ENCODE measurements at regions of chr9 and their contacts with region 1.

Region 1: GRCh38 chr9:136312436-136312835 is 8.5 kb upstream of the CCDC187 start:
- DNase-seq: peak; percentile 58
- ATAC-seq: peak; percentile 94
- H3K4me3 ChIP-seq: no peak overlapping the region
- H3K27ac ChIP-seq: no peak overlapping the region
- H3K4me1 ChIP-seq: peaks cover 3% of the 10 kb centered on the region; the same call in 1 of the 2 replicates
- H3K27me3 ChIP-seq: no peaks in the 10 kb centered on the region
- CTCF ChIP-seq: peak; percentile 89
- POLR2A ChIP-seq: no peak
- RAD21 ChIP-seq: peak; percentile 92

Region 2: GRCh38 chr9:136339173-136339957 is 26.9 kb after region 1 on chr9:
- CTCF ChIA-PET with region 1: no interaction called
- POLR2A ChIA-PET with region 1: no interaction called
- dilution Hi-C with region 1: no loop called
- in situ Hi-C with region 1: no loop called
- intact Hi-C with region 1: loop called (anchors 1 kb)
- DNase-seq: peak; percentile 53
- ATAC-seq: peak; percentile 52
- H3K4me3 ChIP-seq: no peak overlapping the region
- H3K27ac ChIP-seq: no peak overlapping the region
- H3K4me1 ChIP-seq: peaks cover 21% of the 10 kb centered on the region
- H3K27me3 ChIP-seq: no peaks in the 10 kb centered on the region
- CTCF ChIP-seq: peak; percentile 73
- POLR2A ChIP-seq: no peak
- RAD21 ChIP-seq: peak; percentile 53

Region 3: GRCh38 chr9:136363606-136364370 is 51.4 kb after region 1 on chr9 and contains the start of gene DNLZ:
- CTCF ChIA-PET with region 1: interaction called, 3 read pairs
- POLR2A ChIA-PET with region 1: interaction called, 4 read pairs
- dilution Hi-C with region 1: no loop called
- in situ Hi-C with region 1: no loop called
- intact Hi-C with region 1: loop called (anchors 1 kb)
- DNase-seq: peak; percentile 76
- ATAC-seq: peak; percentile 67
- H3K4me3 ChIP-seq: peak within 1 kb of the TSS; percentile 85
- H3K27ac ChIP-seq: peak within 1 kb of the TSS; percentile 83
- H3K4me1 ChIP-seq: peaks cover 29% of the 10 kb centered on the region
- H3K27me3 ChIP-seq: no peaks in the 10 kb centered on the region
- CTCF ChIP-seq: peak; percentile 98
- POLR2A ChIP-seq: peak; percentile 48
- RAD21 ChIP-seq: peak; percentile 54
- total RNA-seq, gene DNLZ: 2.0 and 6.1 TPM in 2 replicates

Region 4: GRCh38 chr9:136380381-136380780 is 67.9 kb after region 1 on chr9:
- CTCF ChIA-PET with region 1: no interaction called
- POLR2A ChIA-PET with region 1: no interaction called
- dilution Hi-C with region 1: no loop called
- in situ Hi-C with region 1: no loop called
- intact Hi-C with region 1: no loop called
- DNase-seq: no peak
- ATAC-seq: no peak
- H3K4me3 ChIP-seq: no peak overlapping the region
- H3K27ac ChIP-seq: no peak overlapping the region
- H3K4me1 ChIP-seq: no peaks in the 10 kb centered on the region
- H3K27me3 ChIP-seq: no peaks in the 10 kb centered on the region
- CTCF ChIP-seq: no peak
- POLR2A ChIP-seq: no peak
- RAD21 ChIP-seq: no peak

Region 5: GRCh38 chr9:136400038-136400834 is 87.8 kb after region 1 on chr9 and contains the start of gene SNAPC4:
- CTCF ChIA-PET with region 1: interaction called, 3 read pairs
- POLR2A ChIA-PET with region 1: no interaction called
- dilution Hi-C with region 1: no loop called
- in situ Hi-C with region 1: no loop called
- intact Hi-C with region 1: loop called (anchors 1 kb)
- DNase-seq: peak; percentile 78
- ATAC-seq: peak; percentile 96
- H3K4me3 ChIP-seq: peak within 1 kb of the TSS; percentile 76
- H3K27ac ChIP-seq: peak within 1 kb of the TSS; percentile 74
- H3K4me1 ChIP-seq: peaks cover 9% of the 10 kb centered on the region
- H3K27me3 ChIP-seq: no peaks in the 10 kb centered on the region
- CTCF ChIP-seq: peak; percentile 94
- POLR2A ChIP-seq: peak; percentile 71
- RAD21 ChIP-seq: peak; percentile 78
- total RNA-seq, gene SNAPC4: 2.5 and 3.1 TPM in 2 replicates